Heart left ventricle (tissue), 16 donors: ENCODE measurements at regions of chr4 and their contacts with region 1.

Region 1: DNA sequence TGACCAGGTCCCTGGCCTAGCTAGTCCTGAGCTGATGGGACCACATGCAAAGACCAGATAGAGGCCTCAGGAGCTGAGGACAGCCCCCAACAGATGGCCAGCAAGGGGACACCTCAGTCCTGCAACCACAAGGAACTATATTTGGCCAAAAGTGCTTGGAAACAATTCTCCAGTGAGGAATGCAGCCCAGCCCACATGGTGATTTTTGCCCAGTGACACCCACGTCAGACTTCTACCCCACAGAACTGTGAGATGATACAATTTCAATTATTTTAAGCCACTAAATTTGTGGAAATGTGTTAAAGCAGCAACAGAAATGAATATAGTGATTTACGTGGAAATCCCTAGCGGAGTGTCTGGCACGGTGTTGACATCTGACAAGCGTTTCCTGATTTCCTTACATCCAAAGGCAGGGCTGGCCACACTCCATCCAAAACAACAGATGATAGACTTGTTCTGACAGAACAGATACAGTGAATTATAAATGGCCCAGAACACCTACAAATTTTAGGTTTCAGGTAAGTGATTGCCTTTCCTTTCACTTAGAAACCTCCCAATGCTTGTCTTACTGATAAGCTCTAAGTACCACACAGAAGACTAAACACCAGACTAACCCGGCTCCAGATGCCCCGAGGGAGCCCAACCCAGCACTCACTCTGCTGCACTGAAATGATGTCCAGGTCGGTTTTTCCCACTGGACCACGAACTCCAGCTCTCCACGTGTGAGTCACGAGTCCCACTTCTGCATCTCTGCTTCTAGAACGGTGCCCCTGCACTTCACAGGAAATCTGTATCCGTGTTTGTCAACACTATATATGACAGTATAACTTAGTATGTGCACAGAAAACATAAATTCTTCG is 5.8 kb downstream of the AFAP1 start:
- DNase-seq: no peak
- ATAC-seq: no peak
- H3K4me3 ChIP-seq: no peak overlapping the region
- H3K27ac ChIP-seq: no peak overlapping the region
- H3K4me1 ChIP-seq: peaks cover 0 to 44% (median 19%) of the 10 kb centered on the region in 12 donors
- H3K27me3 ChIP-seq: peaks cover 0 to 5% (median 0%) of the 10 kb centered on the region in 9 donors
- CTCF ChIP-seq: no peak
- POLR2A ChIP-seq: no peak

Region 2: GRCh38 chr4:7843831-7844593 is 89.9 kb before region 1 on chr4:
- intact Hi-C with region 1: loop called in 1 of 10 experiments (anchors 5 kb)
- DNase-seq: peak; percentile 72 to 82 (median 76)
- ATAC-seq: peak in 3 of 4 donors; percentile 61 to 68 (median 62)
- H3K4me3 ChIP-seq: no peak overlapping the region
- H3K27ac ChIP-seq: peak overlapping the region in 10 of 12 donors; percentile 14 to 85 (median 74)
- H3K4me1 ChIP-seq: peaks cover 0 to 41% (median 15%) of the 10 kb centered on the region in 12 donors
- H3K27me3 ChIP-seq: no peaks in the 10 kb centered on the region
- CTCF ChIP-seq: peak; percentile 48 to 70 (median 60)
- POLR2A ChIP-seq: no peak